Colonic mucosa (tissue), 4 donors: ENCODE measurements at regions of chr11 and their contacts with region 1.

Region 1: DNA sequence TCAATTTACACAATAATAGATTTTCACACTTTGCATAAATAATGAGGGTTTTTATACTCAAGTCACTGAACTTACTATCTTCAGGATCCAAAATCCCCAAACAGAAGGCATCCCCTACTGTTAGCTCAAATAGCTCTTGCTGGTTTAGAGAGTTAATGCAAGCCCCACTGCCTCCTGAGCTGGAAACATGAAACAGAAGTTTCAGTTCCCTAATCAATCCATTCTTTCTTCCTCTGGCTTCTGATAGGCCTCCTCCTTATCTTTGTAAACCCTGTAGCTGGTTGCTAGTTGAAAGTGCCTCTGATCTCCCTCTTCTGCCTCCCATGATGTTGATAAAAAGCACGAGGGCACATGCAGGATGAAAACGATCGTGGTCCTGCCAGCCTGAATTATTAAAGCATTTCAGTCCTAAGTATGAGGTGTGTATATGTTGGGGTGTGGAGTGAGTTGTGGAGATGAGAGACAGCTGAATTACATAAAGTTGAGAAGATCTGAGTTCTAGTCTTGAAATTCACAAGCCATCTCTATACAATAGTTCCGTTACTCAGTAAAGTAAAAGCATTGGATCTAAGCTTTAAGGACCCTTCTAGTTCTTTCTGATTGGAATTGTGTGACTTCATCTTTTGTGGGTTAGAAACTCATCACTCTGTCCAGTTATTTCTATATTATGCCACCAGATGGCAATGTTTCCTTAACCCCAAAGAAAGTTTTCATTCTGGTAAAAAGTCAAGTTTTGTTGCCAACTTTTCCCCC is 35.0 kb upstream of the EHF start:
- DNase-seq: no peak
- H3K4me3 ChIP-seq: no peak overlapping the region
- H3K27ac ChIP-seq: no peak overlapping the region
- H3K4me1 ChIP-seq: peaks cover 9% of the 10 kb centered on the region
- H3K27me3 ChIP-seq: no peaks in the 10 kb centered on the region
- CTCF ChIP-seq: peak; percentile 48

Region 2: GRCh38 chr11:34492806-34493414 is 93.0 kb before region 1 on chr11:
- intact Hi-C with region 1: no loop called
- DNase-seq: peak; percentile 66
- H3K4me3 ChIP-seq: no peak overlapping the region
- H3K27ac ChIP-seq: no peak overlapping the region
- H3K4me1 ChIP-seq: no peaks in the 10 kb centered on the region
- H3K27me3 ChIP-seq: no peaks in the 10 kb centered on the region
- CTCF ChIP-seq: peak; percentile 57

Region 3: DNA sequence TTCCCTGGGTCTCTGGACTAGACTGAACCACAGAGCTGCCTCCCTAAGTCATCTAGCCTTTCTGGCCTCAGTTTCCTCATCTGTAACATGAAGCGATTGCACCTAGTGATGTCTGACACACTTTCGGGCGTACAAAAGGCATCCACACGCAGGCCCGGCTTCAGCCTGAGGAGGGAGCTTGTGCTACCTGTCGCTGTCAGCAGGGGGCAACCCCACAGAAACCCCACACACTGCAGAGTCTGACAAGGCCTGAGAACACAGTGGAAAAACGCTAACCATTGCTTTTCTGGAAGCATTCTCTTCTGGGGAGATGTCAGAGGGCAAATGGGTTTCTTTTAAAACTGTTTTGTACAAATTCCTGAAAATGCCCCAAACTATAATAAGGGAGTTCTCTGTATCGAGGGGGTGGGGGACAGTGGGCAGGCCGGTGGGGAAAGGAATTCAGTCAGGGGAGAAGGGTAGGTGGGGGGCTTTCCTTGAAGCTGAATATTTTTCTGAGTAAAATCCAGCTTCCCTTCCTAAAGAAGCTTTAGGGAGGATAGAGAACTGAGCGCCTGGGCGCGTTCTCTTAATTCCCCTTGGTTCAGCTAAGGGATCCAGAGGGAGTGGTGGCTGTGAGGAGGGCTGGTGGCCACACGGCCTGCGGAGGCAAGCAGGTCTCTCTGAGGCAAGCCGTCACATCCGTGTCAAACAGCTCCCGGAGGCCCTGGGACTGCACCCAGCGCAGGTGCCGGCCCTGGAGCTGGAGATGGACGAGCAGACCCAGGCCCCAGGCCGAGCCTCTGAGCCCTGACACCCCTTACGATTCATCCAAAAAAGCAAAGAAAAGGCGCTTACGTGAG is 72.8 kb before region 1 on chr11:
- intact Hi-C with region 1: loop called (anchors 2 kb)
- DNase-seq: peak; percentile 57
- H3K4me3 ChIP-seq: no peak overlapping the region
- H3K27ac ChIP-seq: no peak overlapping the region
- H3K4me1 ChIP-seq: no peaks in the 10 kb centered on the region
- H3K27me3 ChIP-seq: no peaks in the 10 kb centered on the region
- CTCF ChIP-seq: peak; percentile 76

Region 4: DNA sequence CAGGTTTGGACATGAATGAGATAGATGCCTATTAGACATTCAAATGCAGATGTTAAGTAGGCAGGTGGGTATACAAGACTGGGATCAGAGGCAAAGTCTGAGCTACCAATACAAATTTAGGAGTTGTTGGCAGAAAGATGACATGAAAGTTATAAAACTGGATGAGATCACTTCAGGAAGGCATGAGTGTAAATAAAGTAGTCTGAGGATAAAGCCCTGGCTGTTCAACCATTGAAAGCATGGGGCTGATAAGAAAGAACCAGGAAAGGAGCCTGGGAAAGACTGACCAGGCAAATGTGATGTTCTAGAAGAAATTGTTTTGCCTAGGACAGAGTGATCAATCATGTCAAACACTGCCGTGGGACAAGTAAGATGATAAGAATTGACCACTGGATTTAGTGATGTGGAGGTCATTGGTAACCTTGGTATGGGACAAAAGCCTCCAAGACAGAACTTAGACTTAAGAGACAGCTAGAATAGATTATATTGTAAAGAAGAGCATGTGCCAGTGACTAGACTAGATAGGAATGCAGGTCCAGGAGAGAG is 133.5 kb after region 1 on chr11:
- intact Hi-C with region 1: no loop called
- DNase-seq: no peak
- H3K4me3 ChIP-seq: no peak overlapping the region
- H3K27ac ChIP-seq: peak overlapping the region; percentile 26
- H3K4me1 ChIP-seq: no peaks in the 10 kb centered on the region
- H3K27me3 ChIP-seq: no peaks in the 10 kb centered on the region
- CTCF ChIP-seq: no peak

Region 5: GRCh38 chr11:34890812-34891211 is 304.9 kb after region 1 on chr11:
- intact Hi-C with region 1: loop called (anchors 2 kb)
- DNase-seq: no peak
- H3K4me3 ChIP-seq: no peak overlapping the region
- H3K27ac ChIP-seq: no peak overlapping the region
- H3K4me1 ChIP-seq: no peaks in the 10 kb centered on the region
- H3K27me3 ChIP-seq: no peaks in the 10 kb centered on the region
- CTCF ChIP-seq: peak; percentile 37

Region 6: GRCh38 chr11:35391922-35392813 is 806.3 kb after region 1 on chr11:
- intact Hi-C with region 1: loop called (anchors 10 kb)
- DNase-seq: peak; percentile 89
- H3K4me3 ChIP-seq: no peak overlapping the region
- H3K27ac ChIP-seq: no peak overlapping the region
- H3K4me1 ChIP-seq: peaks cover 11% of the 10 kb centered on the region
- H3K27me3 ChIP-seq: no peaks in the 10 kb centered on the region
- CTCF ChIP-seq: peak; percentile 81